ENCODE measurements at regions of chr1 and their contacts with region 1.

Region 1: DNA sequence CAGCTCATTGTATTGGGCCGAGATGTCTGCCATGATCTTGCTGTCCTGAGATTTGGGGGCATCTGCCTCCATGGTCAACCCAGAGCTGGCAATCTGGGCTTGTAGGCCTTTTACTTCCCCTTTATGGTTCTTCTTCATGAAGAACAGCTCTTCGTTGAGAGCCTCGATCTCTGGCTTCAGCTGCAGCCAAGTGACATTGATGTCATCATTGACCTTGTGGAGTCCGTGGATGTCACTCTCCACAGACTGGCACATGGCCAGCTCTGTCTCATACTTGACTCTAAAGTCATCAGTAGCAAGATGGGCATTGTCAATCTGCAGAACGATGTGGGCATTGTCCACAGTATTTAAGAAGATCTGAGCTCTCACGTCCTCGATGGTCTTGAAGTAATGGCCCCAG is 29.2 kb downstream of the RAP1A start:
- DNase-seq: no peak
- H3K4me3 ChIP-seq: no peak overlapping the region
- H3K27ac ChIP-seq: peak overlapping the region in 1 of 2 donors; percentile 11
- H3K4me1 ChIP-seq: peaks cover 0 to 9% (median 6%) of the 10 kb centered on the region in 3 donors
- H3K27me3 ChIP-seq: no peaks in the 10 kb centered on the region
- CTCF ChIP-seq: no peak

Region 2: DNA sequence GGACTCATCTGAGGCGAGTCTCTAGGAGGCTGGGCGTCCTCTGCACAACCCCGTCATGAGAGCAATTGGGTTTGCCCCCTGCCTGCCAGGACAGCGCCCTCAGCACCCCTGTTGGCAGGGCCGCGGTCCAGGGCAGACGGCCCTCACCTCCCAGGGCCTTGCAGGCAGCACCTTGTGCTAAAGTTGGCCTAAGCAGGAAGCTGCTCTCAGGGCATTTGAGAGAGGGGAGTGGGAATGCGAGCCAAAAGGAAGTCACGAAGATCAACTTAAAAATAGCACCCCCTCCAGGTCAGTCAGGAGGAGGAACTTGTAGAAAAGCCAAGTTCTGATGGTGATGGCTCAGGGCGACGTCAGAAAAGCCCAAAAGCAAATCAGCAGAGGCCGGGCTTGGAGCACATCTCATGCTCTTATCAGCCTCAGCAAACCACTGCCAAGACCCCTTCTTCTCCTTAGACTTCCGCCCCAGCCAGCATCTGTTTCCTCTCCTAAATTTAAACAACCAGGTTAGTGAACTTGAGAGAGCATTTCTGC is 132.7 kb before region 1 on chr1:
- intact Hi-C with region 1: loop called (anchors 10 kb)
- DNase-seq: peak in 4 of 5 donors; percentile 38 to 84 (median 70)
- H3K4me3 ChIP-seq: peak overlapping the region in 1 of 3 donors; percentile 59
- H3K27ac ChIP-seq: peak overlapping the region; percentile 68 to 72
- H3K4me1 ChIP-seq: peaks cover 0 to 9% (median 7%) of the 10 kb centered on the region in 3 donors
- H3K27me3 ChIP-seq: no peaks in the 10 kb centered on the region
- CTCF ChIP-seq: peak; percentile 1

Region 3: DNA sequence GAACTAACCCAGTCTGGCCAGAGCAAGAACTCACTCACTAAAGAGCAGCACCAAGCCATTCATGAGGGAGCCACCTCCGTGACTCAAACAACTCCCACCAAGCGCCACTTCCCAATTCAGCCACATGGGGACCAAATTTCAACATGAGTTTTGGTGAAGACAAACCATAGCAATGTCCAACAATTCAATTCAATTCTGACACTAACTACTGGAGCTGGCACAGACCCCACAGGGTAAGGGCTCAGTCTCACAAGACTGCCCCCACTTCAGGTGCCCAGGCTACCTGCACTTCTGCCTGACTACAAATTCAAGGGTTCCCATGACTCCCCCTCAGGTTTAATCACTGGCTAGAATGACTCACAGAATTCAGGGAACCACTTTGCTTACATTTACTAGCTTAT is 78.0 kb before region 1 on chr1:
- intact Hi-C with region 1: no loop called
- DNase-seq: peak in 1 of 5 donors; percentile 24
- H3K4me3 ChIP-seq: no peak overlapping the region
- H3K27ac ChIP-seq: no peak overlapping the region
- H3K4me1 ChIP-seq: peaks cover 0 to 4% (median 0%) of the 10 kb centered on the region in 3 donors
- H3K27me3 ChIP-seq: no peaks in the 10 kb centered on the region
- CTCF ChIP-seq: peak; percentile 18

Region 4: DNA sequence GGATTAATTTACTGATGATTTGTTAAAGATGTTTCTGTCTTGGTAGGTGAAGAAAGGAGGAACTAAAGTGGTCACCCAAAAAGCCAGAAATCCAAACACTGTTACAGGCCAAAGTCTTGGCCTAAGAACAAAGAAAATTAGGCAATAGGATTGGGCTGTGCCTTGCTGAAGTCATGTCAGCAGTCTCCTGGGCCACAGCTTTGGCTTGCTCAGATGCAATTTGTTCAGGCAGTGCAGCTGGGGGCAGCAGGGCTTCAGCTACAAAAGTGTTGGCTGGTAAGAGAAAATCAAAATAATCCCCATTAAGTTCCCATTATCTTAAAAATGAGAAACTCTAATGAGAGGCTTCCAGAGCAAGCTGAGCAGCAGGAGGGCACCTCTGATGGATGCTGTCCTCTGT is 43.2 kb before region 1 on chr1:
- intact Hi-C with region 1: no loop called
- DNase-seq: peak in 1 of 5 donors; percentile 52
- H3K4me3 ChIP-seq: no peak overlapping the region
- H3K27ac ChIP-seq: no peak overlapping the region
- H3K4me1 ChIP-seq: no peaks in the 10 kb centered on the region
- H3K27me3 ChIP-seq: no peaks in the 10 kb centered on the region
- CTCF ChIP-seq: no peak